GM12878 (cell line): ENCODE measurements at regions of chr15 and their contacts with region 1.

Region 1: DNA sequence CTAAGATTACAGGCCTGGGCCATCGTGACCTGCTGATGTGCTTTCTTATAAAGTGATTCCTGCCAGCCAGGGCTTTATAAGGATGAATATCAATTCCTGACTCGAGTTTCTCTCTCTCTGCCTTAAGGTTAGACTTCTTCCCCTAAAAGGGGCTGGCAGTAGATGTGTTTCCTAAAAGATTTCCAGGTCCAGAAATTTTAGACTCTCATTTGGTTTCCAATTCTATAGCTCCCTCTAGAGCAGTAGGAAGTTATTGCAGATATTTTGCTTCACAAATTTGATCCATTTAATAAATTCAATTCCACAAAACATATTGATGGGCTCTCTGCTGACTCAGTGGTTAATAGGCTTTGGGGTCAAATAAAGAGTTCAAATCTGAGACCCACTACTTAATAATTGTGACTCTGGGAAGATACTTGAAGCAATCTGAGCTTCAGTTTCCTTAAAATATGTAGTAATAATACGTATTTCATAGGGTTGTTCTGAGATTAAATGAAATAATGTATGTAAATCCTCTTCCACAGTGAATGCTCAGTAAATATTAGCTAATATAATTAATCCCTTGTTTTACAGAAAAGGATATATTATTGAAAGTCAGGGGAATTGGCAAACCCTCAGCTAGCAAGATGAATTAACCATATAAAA is 2.1 kb downstream of the TRIM69 start:
- DNase-seq: no peak
- ATAC-seq: no peak
- H3K4me3 ChIP-seq: no peak overlapping the region
- H3K27ac ChIP-seq: no peak overlapping the region
- H3K4me1 ChIP-seq: peaks cover 22% of the 10 kb centered on the region
- H3K27me3 ChIP-seq: no peaks in the 10 kb centered on the region
- CTCF ChIP-seq: peak; percentile 55 to 80 (median 70); a peak in 5 of 6 replicates
- EP300 ChIP-seq: no peak
- POLR2A ChIP-seq: no peak
- RAD21 ChIP-seq: peak; percentile 87

Region 2: GRCh38 chr15:44573386-44573785 is 165.1 kb before region 1 on chr15:
- CTCF ChIA-PET with region 1: interaction called, 142 read pairs
- POLR2A ChIA-PET with region 1: interaction called, 18 read pairs
- RAD21 ChIA-PET with region 1: interaction called, 75 read pairs
- SMC1A ChIA-PET with region 1: interaction called, 148 read pairs
- in situ Hi-C with region 1: no loop called
- intact Hi-C with region 1: loop called (anchors 1 kb)
- DNase-seq: no peak
- ATAC-seq: no peak
- H3K4me3 ChIP-seq: no peak overlapping the region
- H3K27ac ChIP-seq: no peak overlapping the region
- H3K4me1 ChIP-seq: no peaks in the 10 kb centered on the region
- H3K27me3 ChIP-seq: no peaks in the 10 kb centered on the region
- CTCF ChIP-seq: no peak
- EP300 ChIP-seq: no peak
- POLR2A ChIP-seq: no peak
- RAD21 ChIP-seq: no peak

Region 3: GRCh38 chr15:44598892-44599291 is 139.6 kb before region 1 on chr15:
- CTCF ChIA-PET with region 1: interaction called, 73 read pairs
- POLR2A ChIA-PET with region 1: interaction called, 4 read pairs
- RAD21 ChIA-PET with region 1: interaction called, 37 read pairs
- SMC1A ChIA-PET with region 1: interaction called, 55 read pairs
- in situ Hi-C with region 1: loop called (anchors 5 kb)
- intact Hi-C with region 1: loop called (anchors 5 kb)
- DNase-seq: no peak
- ATAC-seq: no peak
- H3K4me3 ChIP-seq: no peak overlapping the region
- H3K27ac ChIP-seq: no peak overlapping the region
- H3K4me1 ChIP-seq: peaks cover 7% of the 10 kb centered on the region; the same call in 1 of the 2 replicates
- H3K27me3 ChIP-seq: no peaks in the 10 kb centered on the region
- CTCF ChIP-seq: no peak
- EP300 ChIP-seq: no peak
- POLR2A ChIP-seq: no peak
- RAD21 ChIP-seq: no peak

Region 4: GRCh38 chr15:44654858-44655257 is 83.6 kb before region 1 on chr15:
- CTCF ChIA-PET with region 1: interaction called, 454 read pairs
- POLR2A ChIA-PET with region 1: interaction called, 194 read pairs
- RAD21 ChIA-PET with region 1: interaction called, 680 read pairs
- SMC1A ChIA-PET with region 1: interaction called, 383 read pairs
- in situ Hi-C with region 1: no loop called
- intact Hi-C with region 1: no loop called
- DNase-seq: no peak
- ATAC-seq: no peak
- H3K4me3 ChIP-seq: no peak overlapping the region
- H3K27ac ChIP-seq: no peak overlapping the region
- H3K4me1 ChIP-seq: no peaks in the 10 kb centered on the region
- H3K27me3 ChIP-seq: no peaks in the 10 kb centered on the region; a peak in 1 of 4 replicates
- CTCF ChIP-seq: no peak
- EP300 ChIP-seq: no peak
- POLR2A ChIP-seq: no peak
- RAD21 ChIP-seq: no peak

Region 5: GRCh38 chr15:44676676-44677075 is 61.8 kb before region 1 on chr15:
- CTCF ChIA-PET with region 1: interaction called, 5 read pairs
- POLR2A ChIA-PET with region 1: interaction called, 7 read pairs
- RAD21 ChIA-PET with region 1: interaction called, 680 read pairs
- SMC1A ChIA-PET with region 1: interaction called, 32 read pairs
- in situ Hi-C with region 1: no loop called
- intact Hi-C with region 1: no loop called
- DNase-seq: no peak
- ATAC-seq: no peak
- H3K4me3 ChIP-seq: no peak overlapping the region
- H3K27ac ChIP-seq: peak overlapping the region; percentile 52; the same call in 1 of the 2 replicates
- H3K4me1 ChIP-seq: peaks cover 53% of the 10 kb centered on the region
- H3K27me3 ChIP-seq: no peaks in the 10 kb centered on the region
- CTCF ChIP-seq: no peak
- EP300 ChIP-seq: no peak
- POLR2A ChIP-seq: peak; percentile 45; the same call in 1 of the 2 replicates
- RAD21 ChIP-seq: no peak

Region 6: GRCh38 chr15:44719293-44719999 is 19.0 kb before region 1 on chr15:
- CTCF ChIA-PET with region 1: interaction called, 278 read pairs
- POLR2A ChIA-PET with region 1: interaction called, 718 read pairs
- RAD21 ChIA-PET with region 1: interaction called, 653 read pairs
- SMC1A ChIA-PET with region 1: interaction called, 637 read pairs
- in situ Hi-C with region 1: no loop called
- intact Hi-C with region 1: no loop called
- DNase-seq: peak; percentile 91
- ATAC-seq: peak; percentile 62
- H3K4me3 ChIP-seq: no peak overlapping the region
- H3K27ac ChIP-seq: peak overlapping the region; percentile 83
- H3K4me1 ChIP-seq: peaks cover 79% of the 10 kb centered on the region
- H3K27me3 ChIP-seq: no peaks in the 10 kb centered on the region
- CTCF ChIP-seq: no peak
- EP300 ChIP-seq: peak in 1 of 2 experiments; percentile 59; a peak in 1 of 4 replicates
- POLR2A ChIP-seq: peak; percentile 86
- RAD21 ChIP-seq: 0 out of 2 replicates have a peak, but pooled peaks have one; percentile 0